ENCODE measurements at regions of chr11 and their contacts with region 1.

Region 1: DNA sequence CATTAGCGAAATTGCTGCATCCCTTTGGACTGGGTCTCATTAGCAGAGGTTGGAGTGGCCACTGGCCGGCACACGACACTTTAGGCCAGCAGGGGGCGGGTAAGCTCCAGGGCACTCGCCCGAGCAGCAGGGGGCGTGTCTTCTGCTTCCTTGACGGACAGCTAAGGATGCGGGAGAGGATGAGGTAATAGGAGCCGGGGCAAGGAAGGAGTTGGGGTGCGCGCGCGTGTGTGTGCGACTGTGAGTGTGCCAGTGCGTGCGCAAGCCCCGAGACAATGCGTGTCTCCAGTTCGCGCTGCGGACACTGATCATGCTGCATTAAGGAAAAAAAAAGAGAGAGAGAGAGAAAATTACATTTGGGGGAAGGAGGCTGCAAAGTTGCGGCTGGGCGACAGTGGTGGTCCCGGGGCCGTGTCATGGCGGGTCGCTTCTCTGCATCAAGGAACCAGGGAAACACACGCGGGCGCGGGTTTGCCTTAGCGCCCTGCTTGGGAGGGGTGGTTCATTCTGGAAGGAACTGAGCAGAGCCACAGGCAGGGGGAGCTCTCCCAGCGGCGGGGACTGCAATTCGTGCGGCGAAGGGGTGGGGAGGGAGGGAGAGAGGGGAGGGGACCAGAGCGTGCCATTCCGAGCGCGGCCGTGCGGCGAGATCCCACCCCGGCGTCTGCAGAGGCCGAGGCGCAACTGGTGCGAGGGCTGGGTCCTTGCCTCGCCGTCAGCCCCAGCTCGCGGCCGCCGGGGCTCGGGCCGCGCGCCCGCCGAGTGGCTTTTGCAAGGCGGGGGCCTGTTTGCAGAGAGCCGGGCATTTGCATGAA is at the start of gene DTX4:
- DNase-seq: peak; percentile 39
- ATAC-seq: peak; percentile 95
- H3K4me3 ChIP-seq: peak within 1 kb of the TSS; percentile 43 to 61
- H3K27ac ChIP-seq: no peak within 1 kb of the TSS
- H3K4me1 ChIP-seq: peaks cover 7% of the 10 kb centered on the region
- H3K27me3 ChIP-seq: peaks cover 11% of the 10 kb centered on the region
- CTCF ChIP-seq: peak; percentile 95
- total RNA-seq, gene DTX4: 0.21 TPM

Region 2: DNA sequence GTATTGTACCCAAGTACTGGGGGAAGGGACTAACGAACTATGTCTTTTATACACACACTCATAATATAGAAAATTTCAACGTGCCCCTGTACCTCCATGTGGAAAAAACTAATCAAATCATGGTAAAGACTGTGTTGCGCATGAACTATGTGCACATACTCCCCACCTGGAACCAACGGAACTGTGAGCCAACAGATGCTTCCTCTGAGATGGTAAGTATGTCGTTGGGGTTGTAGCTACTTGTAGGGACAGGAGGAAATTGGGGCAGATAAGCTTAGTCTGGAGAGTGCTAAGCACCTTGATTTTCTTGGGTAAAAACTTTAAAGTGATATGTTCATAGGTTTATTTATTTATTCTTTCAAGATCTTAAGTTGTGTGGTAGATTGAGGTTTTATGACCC is 480.0 kb before region 1 on chr11:
- CTCF ChIA-PET with region 1: no interaction called
- POLR2A ChIA-PET with region 1: no interaction called
- in situ Hi-C with region 1: no loop called
- intact Hi-C with region 1: no loop called
- DNase-seq: no peak
- ATAC-seq: no peak
- H3K4me3 ChIP-seq: no peak overlapping the region
- H3K27ac ChIP-seq: no peak overlapping the region
- H3K4me1 ChIP-seq: no peaks in the 10 kb centered on the region
- H3K27me3 ChIP-seq: no peaks in the 10 kb centered on the region
- CTCF ChIP-seq: no peak

Region 3: GRCh38 chr11:59207988-59208451 is 36.3 kb after region 1 on chr11:
- CTCF ChIA-PET with region 1: interaction called, 16 read pairs
- POLR2A ChIA-PET with region 1: no interaction called
- in situ Hi-C with region 1: no loop called
- intact Hi-C with region 1: loop called (anchors 1 kb)
- DNase-seq: peak; percentile 33
- ATAC-seq: 0 out of 2 replicates have a peak, but pooled peaks have one; percentile 45
- H3K4me3 ChIP-seq: no peak overlapping the region
- H3K27ac ChIP-seq: no peak overlapping the region
- H3K4me1 ChIP-seq: no peaks in the 10 kb centered on the region
- H3K27me3 ChIP-seq: no peaks in the 10 kb centered on the region; the same call in 1 of the 2 replicates
- CTCF ChIP-seq: peak; percentile 84

Region 4: DNA sequence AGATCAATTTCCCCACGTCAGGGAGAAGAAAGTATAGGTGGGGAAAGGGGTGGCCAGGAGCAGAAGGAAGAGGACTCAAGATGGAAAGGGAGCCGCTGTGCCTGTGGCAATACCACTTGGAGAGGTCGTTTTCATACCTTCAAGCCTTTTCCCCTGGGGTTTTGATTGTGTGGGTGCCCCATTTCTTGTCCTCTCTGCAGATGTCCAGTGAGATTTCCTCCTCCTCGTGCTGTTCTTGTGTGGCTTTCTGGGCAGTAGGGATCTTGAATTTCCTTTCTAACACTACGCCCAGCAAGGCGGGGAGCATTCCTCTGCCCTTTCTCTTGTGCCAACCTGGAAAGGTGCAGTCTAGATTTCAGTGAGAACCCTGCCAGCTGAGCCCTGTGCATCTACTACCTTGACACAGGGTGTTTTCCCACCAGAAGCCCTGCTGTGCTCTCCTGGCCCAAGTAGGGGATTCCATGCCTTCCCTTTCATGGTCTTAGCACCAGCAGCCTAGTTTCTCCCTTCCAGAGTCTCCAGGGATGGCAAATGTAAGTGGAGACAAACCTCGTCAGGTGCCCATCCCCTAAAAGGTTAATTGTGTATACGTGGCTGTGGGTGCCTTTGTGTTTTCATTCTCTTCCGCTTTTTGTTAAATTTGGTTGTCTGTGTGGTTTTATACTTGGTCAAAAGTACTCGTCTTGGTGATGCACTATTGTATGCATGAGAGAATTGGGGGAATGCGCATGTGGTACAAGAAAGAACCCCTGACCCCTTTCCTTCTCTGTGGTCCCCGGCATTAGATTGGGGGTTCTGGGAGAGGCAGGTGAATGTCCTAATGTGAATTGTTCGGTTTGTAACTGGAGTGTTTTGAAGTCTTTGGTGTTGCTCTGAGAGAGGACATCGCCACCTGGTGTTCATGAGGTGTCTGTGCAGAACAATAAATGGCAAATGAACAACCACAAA is 112.4 kb after region 1 on chr11:
- CTCF ChIA-PET with region 1: no interaction called
- POLR2A ChIA-PET with region 1: no interaction called
- in situ Hi-C with region 1: no loop called
- intact Hi-C with region 1: loop called (anchors 1 kb)
- DNase-seq: peak; percentile 35
- ATAC-seq: peak; percentile 72; the same call in 1 of the 2 replicates
- H3K4me3 ChIP-seq: no peak overlapping the region
- H3K27ac ChIP-seq: no peak overlapping the region
- H3K4me1 ChIP-seq: no peaks in the 10 kb centered on the region
- H3K27me3 ChIP-seq: peaks cover 3% of the 10 kb centered on the region; the same call in 1 of the 2 replicates
- CTCF ChIP-seq: peak; percentile 90